ENCODE measurements at regions of chr5 and their contacts with region 1.

Region 1: GRCh38 chr5:141349917-141350619 is at the start of gene PCDHGB1:
- DNase-seq: peak in 1 of 2 experiments; percentile 83
- H3K4me3 ChIP-seq: peak within 1 kb of the TSS; percentile 17 to 53 (median 31); a peak in 7 of 8 replicates
- H3K27ac ChIP-seq: no peak within 1 kb of the TSS
- H3K4me1 ChIP-seq: peaks cover 0 to 5% (median under 1%) of the 10 kb centered on the region in 4 experiments; a peak in 1 of 7 replicates
- H3K27me3 ChIP-seq: no peaks in the 10 kb centered on the region
- CTCF ChIP-seq: peak; percentile 69 to 86 (median 75)
- EP300 ChIP-seq: no peak
- POLR2A ChIP-seq: peak in 1 of 2 experiments; percentile 65; a peak in 1 of 3 replicates
- RAD21 ChIP-seq: peak; percentile 74 to 81
- total RNA-seq, gene PCDHGB1: 2.8 and 3.9 TPM in 2 replicates

Region 2: GRCh38 chr5:141320225-141321169 is 29.6 kb before region 1 on chr5 and contains the start of gene TAF7:
- CTCF ChIA-PET with region 1: interaction called, 21 read pairs
- POLR2A ChIA-PET with region 1: interaction called, 7 read pairs
- DNase-seq: peak; percentile 77 to 95
- H3K4me3 ChIP-seq: peak within 1 kb of the TSS; percentile 79 to 99 (median 92)
- H3K27ac ChIP-seq: peak within 1 kb of the TSS; percentile 95
- H3K4me1 ChIP-seq: no peaks in the 10 kb centered on the region
- H3K27me3 ChIP-seq: no peaks in the 10 kb centered on the region
- CTCF ChIP-seq: peak; percentile 77 to 93 (median 80)
- EP300 ChIP-seq: no peak
- POLR2A ChIP-seq: peak; percentile 95 to 98
- RAD21 ChIP-seq: peak; percentile 45 to 57
- total RNA-seq, gene TAF7: 99.4 and 101 TPM in 2 replicates

Region 3: GRCh38 chr5:141326088-141326854 is 23.8 kb before region 1 on chr5:
- CTCF ChIA-PET with region 1: interaction called, 21 read pairs
- POLR2A ChIA-PET with region 1: interaction called, 7 read pairs
- DNase-seq: peak in 1 of 2 experiments; percentile 73
- H3K4me3 ChIP-seq: peak overlapping the region; percentile 31 to 54 (median 50)
- H3K27ac ChIP-seq: no peak overlapping the region
- H3K4me1 ChIP-seq: no peaks in the 10 kb centered on the region
- H3K27me3 ChIP-seq: no peaks in the 10 kb centered on the region
- CTCF ChIP-seq: peak; percentile 58 to 74 (median 71)
- EP300 ChIP-seq: no peak
- POLR2A ChIP-seq: peak in 1 of 2 experiments; percentile 56; a peak in 1 of 3 replicates
- RAD21 ChIP-seq: peak; percentile 47 to 63

Region 4: GRCh38 chr5:141387233-141387949 is 37.3 kb after region 1 on chr5 and contains the start of gene PCDHGB4:
- CTCF ChIA-PET with region 1: interaction called, 10 read pairs
- POLR2A ChIA-PET with region 1: no interaction called
- DNase-seq: peak in 1 of 2 experiments; percentile 82
- H3K4me3 ChIP-seq: peak within 1 kb of the TSS; percentile 42 to 69 (median 44); a peak in 7 of 8 replicates
- H3K27ac ChIP-seq: no peak within 1 kb of the TSS
- H3K4me1 ChIP-seq: no peaks in the 10 kb centered on the region
- H3K27me3 ChIP-seq: no peaks in the 10 kb centered on the region; a peak in 1 of 7 replicates
- CTCF ChIP-seq: peak; percentile 56 to 66 (median 65)
- EP300 ChIP-seq: no peak
- POLR2A ChIP-seq: no peak
- RAD21 ChIP-seq: peak; percentile 59 to 67
- total RNA-seq, gene PCDHGB4: 7.8 and 9.1 TPM in 2 replicates